ENCODE measurements at regions of chr15 and their contacts with region 1.

Region 1: DNA sequence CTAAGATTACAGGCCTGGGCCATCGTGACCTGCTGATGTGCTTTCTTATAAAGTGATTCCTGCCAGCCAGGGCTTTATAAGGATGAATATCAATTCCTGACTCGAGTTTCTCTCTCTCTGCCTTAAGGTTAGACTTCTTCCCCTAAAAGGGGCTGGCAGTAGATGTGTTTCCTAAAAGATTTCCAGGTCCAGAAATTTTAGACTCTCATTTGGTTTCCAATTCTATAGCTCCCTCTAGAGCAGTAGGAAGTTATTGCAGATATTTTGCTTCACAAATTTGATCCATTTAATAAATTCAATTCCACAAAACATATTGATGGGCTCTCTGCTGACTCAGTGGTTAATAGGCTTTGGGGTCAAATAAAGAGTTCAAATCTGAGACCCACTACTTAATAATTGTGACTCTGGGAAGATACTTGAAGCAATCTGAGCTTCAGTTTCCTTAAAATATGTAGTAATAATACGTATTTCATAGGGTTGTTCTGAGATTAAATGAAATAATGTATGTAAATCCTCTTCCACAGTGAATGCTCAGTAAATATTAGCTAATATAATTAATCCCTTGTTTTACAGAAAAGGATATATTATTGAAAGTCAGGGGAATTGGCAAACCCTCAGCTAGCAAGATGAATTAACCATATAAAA is 2.1 kb downstream of the TRIM69 start:
- DNase-seq: peak in 6 of 9 donors; percentile 40 to 67 (median 60)
- ATAC-seq: peak; percentile 68
- H3K4me3 ChIP-seq: no peak overlapping the region
- H3K4me3 Mint-ChIP-seq: peak overlapping the region in 7 of 10 donors; percentile 49 to 67 (median 53)
- H3K27ac ChIP-seq: peak overlapping the region; percentile 54
- H3K27ac Mint-ChIP-seq: peak overlapping the region; percentile 23 to 95 (median 86)
- H3K4me1 ChIP-seq: peaks cover 42 to 56% of the 10 kb centered on the region in 2 donors
- H3K4me1 Mint-ChIP-seq: peaks cover 24 to 62% (median 56%) of the 10 kb centered on the region in 7 donors
- H3K27me3 ChIP-seq: no peaks in the 10 kb centered on the region
- H3K27me3 Mint-ChIP-seq: peaks cover 0 to 2% (median 0%) of the 10 kb centered on the region in 5 donors

Region 2: DNA sequence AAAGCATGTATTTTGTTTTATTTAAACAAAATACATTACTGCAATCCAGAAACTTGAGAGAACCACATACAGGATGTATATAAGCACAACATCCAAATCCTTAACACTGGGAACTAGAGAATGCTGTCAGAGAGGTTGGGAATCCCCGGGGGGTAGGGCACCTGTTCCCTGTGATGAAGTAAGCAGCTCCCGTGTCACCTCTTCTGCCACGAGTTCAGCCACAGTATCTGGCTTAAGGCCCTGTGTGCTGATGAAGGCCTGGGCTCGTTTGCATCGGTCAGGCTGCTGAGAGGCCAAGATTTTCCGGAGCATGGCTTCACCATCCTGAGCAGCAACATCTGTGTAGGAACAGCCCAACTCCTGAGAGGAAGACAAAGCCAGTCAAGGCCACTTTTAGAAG is 165.1 kb before region 1 on chr15:
- CTCF ChIA-PET with region 1: interaction called, 9 read pairs
- POLR2A ChIA-PET with region 1: interaction called, 5 read pairs
- intact Hi-C with region 1: loop called in 1 of 2 experiments (anchors 1 kb)
- DNase-seq: no peak
- ATAC-seq: no peak
- H3K4me3 ChIP-seq: no peak overlapping the region
- H3K4me3 Mint-ChIP-seq: no peak overlapping the region
- H3K27ac ChIP-seq: peak overlapping the region; percentile 29
- H3K27ac Mint-ChIP-seq: peak overlapping the region in 4 of 9 donors; percentile 14 to 62 (median 33)
- H3K4me1 ChIP-seq: peaks cover 0 to 2% of the 10 kb centered on the region in 2 donors
- H3K4me1 Mint-ChIP-seq: peaks cover 4 to 11% (median 9%) of the 10 kb centered on the region in 7 donors
- H3K27me3 ChIP-seq: no peaks in the 10 kb centered on the region
- H3K27me3 Mint-ChIP-seq: no peaks in the 10 kb centered on the region

Region 3: GRCh38 chr15:44584162-44584749 is 154.2 kb before region 1 on chr15:
- CTCF ChIA-PET with region 1: interaction called, 9 read pairs
- POLR2A ChIA-PET with region 1: interaction called, 19 read pairs
- intact Hi-C with region 1: loop called in 1 of 2 experiments (anchors 2 kb)
- DNase-seq: peak; percentile 21 to 56 (median 46)
- ATAC-seq: peak; percentile 89
- H3K4me3 ChIP-seq: no peak overlapping the region
- H3K4me3 Mint-ChIP-seq: no peak overlapping the region
- H3K27ac ChIP-seq: no peak overlapping the region
- H3K27ac Mint-ChIP-seq: peak overlapping the region in 4 of 9 donors; percentile 33 to 70 (median 61)
- H3K4me1 ChIP-seq: peaks cover 0 to 1% of the 10 kb centered on the region in 2 donors
- H3K4me1 Mint-ChIP-seq: peaks cover 3 to 25% (median 18%) of the 10 kb centered on the region in 7 donors
- H3K27me3 ChIP-seq: no peaks in the 10 kb centered on the region
- H3K27me3 Mint-ChIP-seq: no peaks in the 10 kb centered on the region

Region 4: DNA sequence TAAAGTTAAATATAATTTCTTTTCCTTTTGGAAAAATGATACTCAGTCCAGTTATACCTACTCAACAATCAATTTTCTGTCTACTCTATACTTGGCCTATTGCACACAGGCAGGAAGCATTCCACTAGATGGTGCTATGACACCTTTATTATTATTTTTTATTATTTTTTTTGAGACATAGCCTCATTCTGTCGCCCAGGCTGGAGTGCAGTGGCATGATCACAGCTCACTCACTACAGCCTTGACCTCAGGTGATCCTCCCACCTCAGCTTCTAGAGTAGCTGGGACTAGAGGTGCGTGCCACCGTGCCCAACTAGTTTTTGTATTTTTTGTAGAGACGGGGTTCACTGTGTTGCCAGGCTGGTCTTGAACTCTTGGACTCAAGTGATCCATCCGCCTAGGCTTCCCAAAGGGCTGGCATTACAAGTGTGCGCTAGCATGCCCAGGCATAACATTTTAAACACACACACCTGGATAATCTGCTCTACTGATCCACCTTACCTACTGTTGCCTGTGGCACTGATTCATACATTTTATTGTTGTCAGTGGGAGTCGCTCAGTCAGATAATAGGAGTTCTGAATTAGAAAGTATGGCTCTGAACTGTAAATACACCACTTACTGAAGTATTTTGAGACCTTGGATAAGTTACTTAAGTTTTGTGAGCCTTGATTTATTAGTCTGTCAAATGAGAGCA is 145.3 kb before region 1 on chr15:
- CTCF ChIA-PET with region 1: interaction called, 12 read pairs
- POLR2A ChIA-PET with region 1: interaction called, 5 read pairs
- intact Hi-C with region 1: loop called (anchors 1 to 2 kb)
- DNase-seq: peak in 7 of 9 donors; percentile 19 to 63 (median 57)
- ATAC-seq: peak; percentile 83
- H3K4me3 ChIP-seq: no peak overlapping the region
- H3K4me3 Mint-ChIP-seq: no peak overlapping the region
- H3K27ac ChIP-seq: no peak overlapping the region
- H3K27ac Mint-ChIP-seq: peak overlapping the region in 8 of 9 donors; percentile 19 to 92 (median 52)
- H3K4me1 ChIP-seq: peaks cover 0 to 1% of the 10 kb centered on the region in 2 donors
- H3K4me1 Mint-ChIP-seq: peaks cover 3 to 19% (median 12%) of the 10 kb centered on the region in 7 donors
- H3K27me3 ChIP-seq: no peaks in the 10 kb centered on the region
- H3K27me3 Mint-ChIP-seq: no peaks in the 10 kb centered on the region

Region 5: DNA sequence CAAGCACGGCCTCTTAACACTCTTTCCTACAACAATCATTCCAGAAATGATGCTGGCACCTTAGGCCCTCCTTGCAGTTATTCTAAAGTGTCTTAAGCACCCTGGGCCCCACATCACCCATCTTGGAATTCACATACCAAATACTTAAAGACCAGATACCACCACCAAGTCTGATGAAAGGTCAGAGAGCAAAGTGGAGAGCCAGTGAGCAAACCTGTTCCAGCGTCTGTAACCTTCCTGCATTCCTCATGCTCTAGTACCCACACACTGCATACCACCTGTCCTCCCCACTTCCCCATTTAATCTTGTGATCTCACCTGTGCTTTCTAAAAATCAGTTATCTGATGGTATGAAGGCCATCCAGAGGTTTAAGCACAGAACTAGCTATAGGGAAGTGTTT is 68.0 kb before region 1 on chr15:
- CTCF ChIA-PET with region 1: interaction called, 105 read pairs
- POLR2A ChIA-PET with region 1: interaction called, 3,822 read pairs
- intact Hi-C with region 1: no loop called
- DNase-seq: no peak
- ATAC-seq: no peak
- H3K4me3 ChIP-seq: no peak overlapping the region
- H3K4me3 Mint-ChIP-seq: peak overlapping the region in 9 of 10 donors; percentile 38 to 65 (median 52)
- H3K27ac ChIP-seq: peak overlapping the region; percentile 69
- H3K27ac Mint-ChIP-seq: peak overlapping the region; percentile 68 to 99 (median 94)
- H3K4me1 ChIP-seq: peaks cover 58 to 87% of the 10 kb centered on the region in 2 donors
- H3K4me1 Mint-ChIP-seq: peaks cover 69 to 98% (median 94%) of the 10 kb centered on the region in 7 donors
- H3K27me3 ChIP-seq: no peaks in the 10 kb centered on the region
- H3K27me3 Mint-ChIP-seq: no peaks in the 10 kb centered on the region

Measured in naive thymus-derived CD4-positive, alpha-beta T cell (primary cell).